CD8-positive, alpha-beta T cell (primary cell): ENCODE measurements at regions of chr16 and their contacts with region 1.

Region 1: GRCh38 chr16:18969050-18969854 is 14.5 kb upstream of the TMC7 start:
- DNase-seq: peak; percentile 58 to 89 (median 76)
- ATAC-seq: peak; percentile 81
- H3K4me3 ChIP-seq: no peak overlapping the region
- H3K4me3 Mint-ChIP-seq: no peak overlapping the region
- H3K27ac ChIP-seq: no peak overlapping the region
- H3K27ac Mint-ChIP-seq: no peak overlapping the region
- H3K4me1 ChIP-seq: no peaks in the 10 kb centered on the region
- H3K4me1 Mint-ChIP-seq: peaks cover 5% of the 10 kb centered on the region
- H3K27me3 ChIP-seq: no peaks in the 10 kb centered on the region
- H3K27me3 Mint-ChIP-seq: no peaks in the 10 kb centered on the region
- CTCF ChIP-seq: peak; percentile 97

Region 2: GRCh38 chr16:18789850-18790724 is 179.2 kb before region 1 on chr16 and contains the start of gene RPS15A:
- CTCF ChIA-PET with region 1: interaction called, 5 read pairs
- POLR2A ChIA-PET with region 1: no interaction called
- intact Hi-C with region 1: loop called in 1 of 2 experiments (anchors 5 kb)
- DNase-seq: peak; percentile 81 to 99 (median 91)
- ATAC-seq: peak; percentile 96
- H3K4me3 ChIP-seq: peak within 1 kb of the TSS; percentile 98 to 100
- H3K4me3 Mint-ChIP-seq: peak within 1 kb of the TSS; percentile 95
- H3K27ac ChIP-seq: peak within 1 kb of the TSS; percentile 76 to 88
- H3K27ac Mint-ChIP-seq: peak within 1 kb of the TSS; percentile 88
- H3K4me1 ChIP-seq: peaks cover 39% of the 10 kb centered on the region
- H3K4me1 Mint-ChIP-seq: peaks cover 50% of the 10 kb centered on the region
- H3K27me3 ChIP-seq: no peaks in the 10 kb centered on the region
- H3K27me3 Mint-ChIP-seq: no peaks in the 10 kb centered on the region
- CTCF ChIP-seq: no peak
- total RNA-seq, gene RPS15A: 3,671 to 3,755 TPM

Region 3: DNA sequence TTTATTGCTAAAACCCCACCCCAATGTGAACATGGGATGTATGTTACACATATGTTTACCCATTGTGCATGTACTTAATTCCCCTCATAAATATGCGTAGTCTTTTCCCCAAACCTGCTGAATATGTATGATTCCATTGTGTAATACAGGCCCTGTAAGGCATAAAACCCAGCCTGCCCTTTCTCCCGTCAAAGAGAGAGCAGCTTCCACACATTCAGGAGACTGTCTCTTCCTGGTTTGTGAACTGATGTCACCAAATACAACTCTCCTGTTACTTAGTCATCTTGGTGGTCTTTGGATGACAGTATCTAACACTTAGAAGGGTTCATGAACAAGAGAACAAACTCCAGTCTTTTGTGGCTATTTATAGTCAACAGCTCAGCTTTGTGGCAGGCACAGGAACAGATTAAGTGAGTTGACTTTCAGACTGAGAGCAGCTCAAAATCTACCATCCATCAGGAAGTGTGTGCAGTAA is 10.2 kb before region 1 on chr16:
- CTCF ChIA-PET with region 1: interaction called, 21 read pairs
- POLR2A ChIA-PET with region 1: no interaction called
- intact Hi-C with region 1: no loop called
- DNase-seq: no peak
- ATAC-seq: no peak
- H3K4me3 ChIP-seq: no peak overlapping the region
- H3K4me3 Mint-ChIP-seq: no peak overlapping the region
- H3K27ac ChIP-seq: no peak overlapping the region
- H3K27ac Mint-ChIP-seq: no peak overlapping the region
- H3K4me1 ChIP-seq: peaks cover 5% of the 10 kb centered on the region
- H3K4me1 Mint-ChIP-seq: peaks cover 7% of the 10 kb centered on the region
- H3K27me3 ChIP-seq: no peaks in the 10 kb centered on the region
- H3K27me3 Mint-ChIP-seq: no peaks in the 10 kb centered on the region
- CTCF ChIP-seq: no peak

Region 4: DNA sequence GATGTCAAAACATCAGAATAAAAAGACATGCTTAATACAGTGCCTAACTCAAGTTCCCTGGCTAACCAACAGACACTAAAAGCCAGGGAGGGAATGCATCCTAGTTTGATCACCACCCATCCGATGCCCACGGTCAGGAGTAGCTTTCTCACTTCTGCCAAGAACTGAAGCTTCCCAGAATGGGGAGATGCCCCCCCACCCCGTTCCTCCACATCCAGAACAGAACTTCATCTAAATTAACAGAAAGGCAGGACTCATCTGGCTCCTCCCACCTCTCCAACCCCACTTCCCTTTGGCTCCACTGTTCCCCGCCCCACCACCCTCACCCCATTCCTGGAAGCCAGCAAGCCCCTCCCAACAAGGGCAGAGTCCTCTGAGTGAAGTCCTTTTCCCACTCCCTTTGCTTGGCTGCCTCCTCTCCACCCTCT is 519.0 kb after region 1 on chr16:
- CTCF ChIA-PET with region 1: no interaction called
- POLR2A ChIA-PET with region 1: no interaction called
- intact Hi-C with region 1: no loop called
- DNase-seq: no peak
- ATAC-seq: no peak
- H3K4me3 ChIP-seq: no peak overlapping the region
- H3K4me3 Mint-ChIP-seq: no peak overlapping the region
- H3K27ac ChIP-seq: no peak overlapping the region
- H3K27ac Mint-ChIP-seq: no peak overlapping the region
- H3K4me1 ChIP-seq: no peaks in the 10 kb centered on the region
- H3K4me1 Mint-ChIP-seq: no peaks in the 10 kb centered on the region
- H3K27me3 ChIP-seq: no peaks in the 10 kb centered on the region
- H3K27me3 Mint-ChIP-seq: no peaks in the 10 kb centered on the region
- CTCF ChIP-seq: no peak